ENCODE measurements at regions of chr6 and their contacts with region 1.

Region 1: GRCh38 chr6:150891888-150892485 is 26.5 kb downstream of the MTHFD1L start:
- DNase-seq: peak; percentile 21
- ATAC-seq: peak; percentile 75
- H3K4me3 Mint-ChIP-seq: no peak overlapping the region
- H3K27ac Mint-ChIP-seq: no peak overlapping the region
- H3K4me1 Mint-ChIP-seq: peaks cover 25% of the 10 kb centered on the region
- H3K27me3 Mint-ChIP-seq: no peaks in the 10 kb centered on the region
- CTCF ChIP-seq: peak; percentile 83

Region 2: GRCh38 chr6:150905769-150906506 is 14.0 kb after region 1 on chr6:
- CTCF ChIA-PET with region 1: interaction called, 16 read pairs
- POLR2A ChIA-PET with region 1: interaction called, 5 read pairs
- intact Hi-C with region 1: no loop called
- DNase-seq: no peak
- ATAC-seq: no peak
- H3K4me3 Mint-ChIP-seq: no peak overlapping the region
- H3K27ac Mint-ChIP-seq: no peak overlapping the region
- H3K4me1 Mint-ChIP-seq: no peaks in the 10 kb centered on the region
- H3K27me3 Mint-ChIP-seq: no peaks in the 10 kb centered on the region
- CTCF ChIP-seq: no peak

Region 3: DNA sequence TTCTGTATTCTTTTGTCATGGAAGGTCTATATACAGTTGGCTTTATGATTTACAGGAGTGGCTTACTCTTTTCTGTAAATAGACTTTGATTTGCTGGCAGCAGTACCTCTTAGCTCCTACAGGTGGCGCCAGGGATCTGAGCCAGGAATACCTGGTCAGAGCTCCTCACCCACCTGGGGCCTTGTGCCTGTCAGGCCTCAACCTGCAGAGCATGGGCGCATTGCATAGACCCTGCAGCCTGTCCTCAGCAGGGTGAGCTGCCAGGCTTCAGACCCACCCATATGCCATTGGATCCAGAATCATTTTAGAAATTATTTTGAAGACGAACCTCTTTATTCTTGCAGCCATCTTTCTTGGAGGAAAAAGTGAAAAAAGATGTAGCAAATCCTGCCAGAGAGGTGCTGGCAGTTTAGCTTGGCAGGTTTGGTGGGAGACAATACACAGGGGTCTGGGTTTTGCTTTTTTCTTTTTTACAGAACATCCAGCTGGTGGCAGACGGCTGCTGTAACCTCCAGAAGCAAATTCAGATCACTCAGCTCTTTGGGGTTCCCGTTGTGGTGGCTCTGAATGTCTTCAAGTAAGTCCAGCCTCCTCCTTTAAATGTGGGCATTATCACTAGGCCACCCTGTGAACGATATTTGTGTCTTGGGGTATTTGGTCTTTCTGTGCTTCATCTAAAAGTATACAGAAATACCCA is 122.6 kb after region 1 on chr6:
- CTCF ChIA-PET with region 1: interaction called, 12 read pairs
- POLR2A ChIA-PET with region 1: no interaction called
- intact Hi-C with region 1: no loop called
- DNase-seq: peak; percentile 27
- ATAC-seq: peak; percentile 76
- H3K4me3 Mint-ChIP-seq: no peak overlapping the region
- H3K27ac Mint-ChIP-seq: no peak overlapping the region
- H3K4me1 Mint-ChIP-seq: peaks cover 3% of the 10 kb centered on the region
- H3K27me3 Mint-ChIP-seq: no peaks in the 10 kb centered on the region
- CTCF ChIP-seq: peak; percentile 56

Region 4: DNA sequence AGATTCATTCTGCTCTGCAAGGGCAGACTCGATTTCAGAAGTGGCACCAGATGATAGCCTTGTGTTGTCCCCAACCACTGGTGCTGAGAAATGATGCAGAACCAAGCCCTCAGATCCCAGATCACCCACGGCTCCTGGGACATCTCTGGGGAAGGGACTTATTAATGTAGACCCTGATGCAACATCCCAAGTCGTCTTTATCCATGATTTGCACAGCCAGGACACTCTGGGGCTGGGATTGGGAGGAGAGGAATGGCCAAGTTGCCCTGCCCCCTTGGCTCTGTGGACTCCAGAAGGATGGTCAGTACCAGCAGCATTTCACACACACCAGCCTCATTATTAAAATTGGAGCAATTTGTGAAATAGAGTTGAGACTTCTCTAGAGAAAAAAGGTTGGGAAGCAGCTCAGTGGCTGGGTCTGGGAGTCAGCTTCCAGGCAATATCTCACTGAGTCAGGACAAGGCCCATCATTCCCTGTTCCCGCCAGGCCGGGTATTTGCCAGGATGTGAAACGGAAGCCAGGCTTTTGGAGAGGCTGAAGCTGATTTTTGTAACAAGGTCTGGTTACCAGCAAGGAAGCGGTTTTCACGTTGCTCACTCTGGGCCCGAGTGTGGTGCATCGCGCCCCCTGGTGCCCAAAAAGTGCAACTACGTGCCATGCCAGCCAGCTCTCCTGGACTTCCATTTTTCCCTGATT is 432.0 kb after region 1 on chr6:
- CTCF ChIA-PET with region 1: interaction called, 164 read pairs
- POLR2A ChIA-PET with region 1: no interaction called
- intact Hi-C with region 1: loop called (anchors 1 kb)
- DNase-seq: peak; percentile 61
- ATAC-seq: peak; percentile 84
- H3K4me3 Mint-ChIP-seq: peak overlapping the region; percentile 53
- H3K27ac Mint-ChIP-seq: no peak overlapping the region
- H3K4me1 Mint-ChIP-seq: peaks cover 23% of the 10 kb centered on the region
- H3K27me3 Mint-ChIP-seq: peaks cover 30% of the 10 kb centered on the region
- CTCF ChIP-seq: no peak

Region 5: DNA sequence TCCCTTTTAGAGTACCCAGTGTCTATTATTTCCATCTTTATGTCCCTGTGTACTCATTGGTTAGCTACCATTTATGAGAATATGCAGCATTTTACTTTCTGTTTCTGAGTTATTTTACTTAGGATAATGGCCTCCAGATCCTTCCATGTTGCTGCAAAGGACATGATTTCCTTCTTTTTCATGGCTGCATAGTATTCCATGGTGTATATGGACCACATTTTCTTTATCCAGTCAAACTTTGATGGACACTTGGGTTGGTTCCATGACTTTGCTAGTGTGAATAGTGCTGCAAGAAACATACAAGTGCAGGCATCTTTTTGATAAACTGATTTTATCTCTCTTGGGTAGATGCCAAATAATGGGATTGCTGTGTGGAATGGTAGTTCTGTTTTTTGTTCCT is 443.9 kb after region 1 on chr6:
- CTCF ChIA-PET with region 1: interaction called, 17 read pairs
- POLR2A ChIA-PET with region 1: no interaction called
- intact Hi-C with region 1: no loop called
- DNase-seq: no peak
- ATAC-seq: no peak
- H3K4me3 Mint-ChIP-seq: no peak overlapping the region
- H3K27ac Mint-ChIP-seq: no peak overlapping the region
- H3K4me1 Mint-ChIP-seq: peaks cover 3% of the 10 kb centered on the region
- H3K27me3 Mint-ChIP-seq: peaks cover 4% of the 10 kb centered on the region
- CTCF ChIP-seq: no peak

Region 6: DNA sequence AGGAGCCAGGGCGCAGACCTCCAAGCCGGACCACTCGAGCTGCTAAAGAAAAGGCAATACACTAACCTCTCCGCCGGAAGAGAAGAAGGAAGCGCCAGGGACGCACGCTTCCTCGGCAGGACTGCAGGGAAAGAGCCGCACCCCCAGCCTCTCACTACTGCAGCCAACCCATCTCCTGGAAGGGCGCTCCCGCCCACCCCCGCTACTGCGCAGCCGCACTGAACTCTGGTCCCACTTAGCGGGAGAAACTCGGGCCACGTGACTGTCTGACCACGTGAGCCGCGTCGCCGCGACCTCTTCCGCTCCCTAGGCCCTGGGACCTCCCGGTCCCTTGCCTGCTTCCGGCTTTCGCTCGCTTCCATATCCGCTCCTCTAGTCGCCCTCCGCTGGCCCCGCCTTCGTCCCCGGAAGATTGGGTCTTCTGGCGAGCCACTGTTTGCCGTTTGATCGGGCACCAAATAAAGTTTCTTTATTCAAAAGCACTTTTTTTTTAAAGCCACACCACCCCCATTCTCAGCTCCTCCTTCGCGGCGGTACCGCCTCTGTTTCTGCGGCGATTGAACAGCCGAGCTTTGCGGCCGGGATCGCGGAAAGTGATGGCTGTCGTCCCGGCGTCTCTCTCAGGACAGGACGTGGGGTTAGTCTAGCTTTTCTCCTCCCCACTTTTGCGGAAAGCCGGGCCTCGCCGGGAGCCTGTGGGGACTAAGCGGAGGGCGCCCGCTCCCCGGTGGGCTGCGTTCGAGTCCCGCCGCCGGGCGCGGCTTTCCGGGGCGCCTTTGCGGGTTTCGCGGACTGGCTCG is 560.2 kb after region 1 on chr6 and contains the start of gene RMND1:
- CTCF ChIA-PET with region 1: no interaction called
- POLR2A ChIA-PET with region 1: no interaction called
- intact Hi-C with region 1: no loop called
- DNase-seq: peak; percentile 96
- ATAC-seq: peak; percentile 96
- H3K4me3 Mint-ChIP-seq: peak within 1 kb of the TSS; percentile 97
- H3K27ac Mint-ChIP-seq: peak within 1 kb of the TSS; percentile 91
- H3K4me1 Mint-ChIP-seq: peaks cover 28% of the 10 kb centered on the region
- H3K27me3 Mint-ChIP-seq: no peaks in the 10 kb centered on the region
- CTCF ChIP-seq: no peak
- total RNA-seq, gene RMND1: 12.4 and 17.1 TPM in 2 replicates

Region 7: GRCh38 chr6:151475653-151476523 is 583.9 kb after region 1 on chr6:
- CTCF ChIA-PET with region 1: interaction called, 3 read pairs
- POLR2A ChIA-PET with region 1: no interaction called
- intact Hi-C with region 1: loop called (anchors 1 kb)
- DNase-seq: no peak
- ATAC-seq: peak; percentile 31
- H3K4me3 Mint-ChIP-seq: peak overlapping the region; percentile 44
- H3K27ac Mint-ChIP-seq: no peak overlapping the region
- H3K4me1 Mint-ChIP-seq: peaks cover 9% of the 10 kb centered on the region
- H3K27me3 Mint-ChIP-seq: no peaks in the 10 kb centered on the region
- CTCF ChIP-seq: peak; percentile 97

Region 8: GRCh38 chr6:152267967-152268845 is 1376.2 kb after region 1 on chr6:
- CTCF ChIA-PET with region 1: no interaction called
- POLR2A ChIA-PET with region 1: no interaction called
- intact Hi-C with region 1: loop called (anchors 1 kb)
- DNase-seq: no peak
- ATAC-seq: no peak
- H3K4me3 Mint-ChIP-seq: no peak overlapping the region
- H3K27ac Mint-ChIP-seq: no peak overlapping the region
- H3K4me1 Mint-ChIP-seq: no peaks in the 10 kb centered on the region
- H3K27me3 Mint-ChIP-seq: no peaks in the 10 kb centered on the region
- CTCF ChIP-seq: no peak